ENCODE measurements at regions of chr1 and their contacts with region 1.

Region 1: DNA sequence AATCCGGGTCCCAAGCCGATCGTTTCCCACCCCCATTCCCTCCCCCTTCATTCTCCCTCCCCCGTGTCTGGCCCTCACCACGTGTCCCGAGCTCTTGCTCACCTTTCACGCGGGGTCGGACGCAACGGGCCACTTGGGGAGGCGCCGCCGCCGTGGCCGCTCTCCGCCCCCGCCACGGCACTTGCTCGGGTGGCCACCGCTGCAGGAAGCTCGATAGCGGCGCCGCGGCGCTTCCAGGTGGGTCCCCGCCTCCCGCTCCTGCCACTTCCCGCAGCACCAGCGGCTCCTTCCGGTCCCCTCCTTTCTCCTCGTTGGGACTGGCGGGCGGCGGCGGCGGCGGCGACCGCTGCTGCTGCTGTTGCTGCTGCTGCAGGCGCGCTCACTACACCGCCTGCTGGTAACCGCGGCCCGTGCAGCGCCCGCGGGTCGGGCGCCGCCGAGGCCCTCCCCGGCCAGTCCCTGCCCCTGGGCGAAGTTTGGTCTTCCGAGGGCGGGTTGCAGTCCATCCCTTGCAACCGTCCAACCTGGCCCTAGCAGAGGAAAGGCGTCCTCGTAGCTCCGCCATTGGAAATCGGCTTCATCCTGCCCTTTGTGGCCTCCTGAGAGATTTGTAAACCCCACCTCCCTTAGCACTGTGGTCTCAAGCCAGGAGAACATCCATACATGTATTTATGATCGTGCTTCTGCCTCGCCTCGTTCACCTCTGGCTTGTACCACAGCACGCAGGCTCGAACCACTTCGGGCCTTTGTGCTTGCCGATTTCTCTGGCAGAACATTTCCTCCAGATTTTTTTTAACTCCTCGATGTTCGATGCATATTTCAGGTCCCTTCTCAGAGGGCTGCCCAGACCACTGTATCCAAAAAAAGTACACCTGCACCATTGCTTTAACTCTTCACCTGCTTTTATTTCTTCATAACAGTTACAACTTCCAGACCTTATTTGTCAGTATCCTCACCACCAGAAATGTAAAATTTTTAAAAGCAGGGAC is 996 bp upstream of the ZZZ3 start:
- DNase-seq: peak; percentile 81 to 95 (median 91)
- ATAC-seq: peak; percentile 71
- H3K4me3 ChIP-seq: peak overlapping the region; percentile 82 to 87
- H3K4me3 Mint-ChIP-seq: peak overlapping the region; percentile 91
- H3K27ac ChIP-seq: peak overlapping the region; percentile 89 to 99
- H3K27ac Mint-ChIP-seq: peak overlapping the region; percentile 97
- H3K4me1 ChIP-seq: peaks cover 39% of the 10 kb centered on the region
- H3K4me1 Mint-ChIP-seq: peaks cover 39% of the 10 kb centered on the region
- H3K27me3 ChIP-seq: no peaks in the 10 kb centered on the region
- H3K27me3 Mint-ChIP-seq: no peaks in the 10 kb centered on the region
- CTCF ChIP-seq: peak; percentile 90

Region 2: GRCh38 chr1:75785983-75786853 is 1897.2 kb before region 1 on chr1 and contains the start of gene RABGGTB:
- CTCF ChIA-PET with region 1: no interaction called
- POLR2A ChIA-PET with region 1: no interaction called
- intact Hi-C with region 1: loop called (anchors 2 to 5 kb)
- DNase-seq: peak; percentile 89 to 97 (median 91)
- ATAC-seq: peak; percentile 97
- H3K4me3 ChIP-seq: peak within 1 kb of the TSS; percentile 73
- H3K4me3 Mint-ChIP-seq: peak within 1 kb of the TSS; percentile 96
- H3K27ac ChIP-seq: peak within 1 kb of the TSS; percentile 69 to 89
- H3K27ac Mint-ChIP-seq: peak within 1 kb of the TSS; percentile 97
- H3K4me1 ChIP-seq: peaks cover 46% of the 10 kb centered on the region
- H3K4me1 Mint-ChIP-seq: peaks cover 58% of the 10 kb centered on the region
- H3K27me3 ChIP-seq: no peaks in the 10 kb centered on the region
- H3K27me3 Mint-ChIP-seq: no peaks in the 10 kb centered on the region
- CTCF ChIP-seq: no peak
- total RNA-seq, gene RABGGTB: 186 to 193 TPM

Region 3: DNA sequence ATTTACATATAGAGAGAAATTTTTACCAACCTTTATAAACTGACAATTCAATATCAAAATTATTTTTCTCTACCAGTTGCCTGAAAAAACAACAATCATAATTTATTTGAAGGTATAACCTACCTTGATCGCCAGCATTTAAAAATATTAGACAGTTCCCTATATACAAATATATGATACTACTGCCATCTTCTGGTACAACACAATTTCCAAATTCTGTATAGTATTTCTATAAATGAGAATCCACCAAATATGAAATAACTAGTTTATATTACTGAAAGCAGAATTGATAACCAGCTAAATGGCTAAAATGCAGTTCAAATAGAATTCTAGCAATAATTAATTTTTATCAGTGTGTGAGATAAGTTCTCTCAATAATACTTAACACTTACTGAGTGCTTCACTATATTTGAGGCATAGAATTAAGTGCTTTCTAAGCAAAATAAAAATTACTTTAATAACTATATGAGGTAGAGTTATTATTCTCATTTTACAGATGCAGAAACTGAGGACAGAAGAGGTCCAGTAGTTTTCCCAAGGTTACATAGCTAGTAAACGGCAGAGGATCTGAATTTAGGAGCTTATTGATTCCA is 539.8 kb before region 1 on chr1:
- CTCF ChIA-PET with region 1: no interaction called
- POLR2A ChIA-PET with region 1: no interaction called
- intact Hi-C with region 1: loop called in 1 of 2 experiments (anchors 2 kb)
- DNase-seq: peak in 2 of 9 experiments; percentile 15 to 28
- ATAC-seq: no peak
- H3K4me3 ChIP-seq: no peak overlapping the region
- H3K4me3 Mint-ChIP-seq: no peak overlapping the region
- H3K27ac ChIP-seq: no peak overlapping the region
- H3K27ac Mint-ChIP-seq: no peak overlapping the region
- H3K4me1 ChIP-seq: peaks cover 6% of the 10 kb centered on the region
- H3K4me1 Mint-ChIP-seq: peaks cover 5% of the 10 kb centered on the region
- H3K27me3 ChIP-seq: no peaks in the 10 kb centered on the region
- H3K27me3 Mint-ChIP-seq: no peaks in the 10 kb centered on the region
- CTCF ChIP-seq: peak; percentile 53

Region 4: GRCh38 chr1:77438236-77438913 is 245.1 kb before region 1 on chr1:
- CTCF ChIA-PET with region 1: no interaction called
- POLR2A ChIA-PET with region 1: no interaction called
- intact Hi-C with region 1: loop called in 1 of 2 experiments (anchors 5 kb)
- DNase-seq: no peak
- ATAC-seq: no peak
- H3K4me3 ChIP-seq: peak overlapping the region in 1 of 2 experiments; percentile 8
- H3K4me3 Mint-ChIP-seq: peak overlapping the region; percentile 52
- H3K27ac ChIP-seq: no peak overlapping the region
- H3K27ac Mint-ChIP-seq: peak overlapping the region; percentile 76
- H3K4me1 ChIP-seq: peaks cover 33% of the 10 kb centered on the region
- H3K4me1 Mint-ChIP-seq: peaks cover 32% of the 10 kb centered on the region
- H3K27me3 ChIP-seq: no peaks in the 10 kb centered on the region
- H3K27me3 Mint-ChIP-seq: no peaks in the 10 kb centered on the region
- CTCF ChIP-seq: no peak

Region 5: GRCh38 chr1:77639056-77639455 is 44.4 kb before region 1 on chr1:
- CTCF ChIA-PET with region 1: no interaction called
- POLR2A ChIA-PET with region 1: no interaction called
- intact Hi-C with region 1: loop called (anchors 5 kb)
- DNase-seq: no peak
- ATAC-seq: no peak
- H3K4me3 ChIP-seq: no peak overlapping the region
- H3K4me3 Mint-ChIP-seq: no peak overlapping the region
- H3K27ac ChIP-seq: no peak overlapping the region
- H3K27ac Mint-ChIP-seq: peak overlapping the region; percentile 38
- H3K4me1 ChIP-seq: no peaks in the 10 kb centered on the region
- H3K4me1 Mint-ChIP-seq: peaks cover 18% of the 10 kb centered on the region
- H3K27me3 ChIP-seq: no peaks in the 10 kb centered on the region
- H3K27me3 Mint-ChIP-seq: no peaks in the 10 kb centered on the region
- CTCF ChIP-seq: no peak

Region 6: DNA sequence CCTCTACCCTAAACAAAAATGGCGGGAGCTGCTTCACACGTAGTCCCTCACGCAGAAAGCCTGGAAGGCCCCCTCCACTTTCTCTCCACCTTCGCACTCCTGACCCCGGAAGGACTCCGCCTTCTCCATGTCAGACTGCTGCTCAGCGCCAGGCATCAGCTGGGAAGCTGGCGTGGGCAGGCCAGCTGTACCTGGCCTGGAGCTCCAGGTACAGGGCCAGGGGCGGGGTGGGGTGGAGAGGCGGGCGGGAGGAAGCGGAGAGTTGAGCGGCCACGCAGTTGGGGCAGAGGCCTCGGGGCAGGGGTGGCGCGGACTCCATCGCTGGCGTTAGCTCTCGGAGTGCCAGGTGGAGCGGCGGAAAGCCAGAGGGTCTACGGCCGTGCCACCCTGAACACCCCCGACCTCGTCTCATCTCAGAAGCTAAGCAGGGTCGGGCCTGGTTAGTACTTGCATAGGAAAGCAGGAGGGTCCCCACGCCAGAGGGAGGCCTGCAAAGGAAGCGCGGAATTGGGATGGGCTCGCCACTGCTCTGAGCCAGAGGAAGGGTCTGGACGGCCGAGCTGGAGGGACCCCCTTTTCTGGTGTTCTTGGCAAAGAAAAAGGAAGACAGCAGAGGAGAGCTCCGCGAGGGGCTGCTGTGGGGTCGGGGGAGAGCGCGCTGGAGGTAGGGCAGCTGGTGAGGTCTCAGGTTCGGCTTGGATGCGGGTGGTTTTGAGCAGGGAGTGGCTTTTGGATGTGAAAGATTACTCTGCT is 96.3 kb after region 1 on chr1 and contains the start of gene MIGA1:
- CTCF ChIA-PET with region 1: no interaction called
- POLR2A ChIA-PET with region 1: interaction called, 5 read pairs
- intact Hi-C with region 1: loop called (anchors 1 to 2 kb)
- DNase-seq: peak; percentile 73 to 96 (median 89)
- ATAC-seq: peak; percentile 97
- H3K4me3 ChIP-seq: peak within 1 kb of the TSS; percentile 86 to 90
- H3K4me3 Mint-ChIP-seq: peak within 1 kb of the TSS; percentile 97
- H3K27ac ChIP-seq: peak within 1 kb of the TSS; percentile 61 to 65
- H3K27ac Mint-ChIP-seq: peak within 1 kb of the TSS; percentile 90
- H3K4me1 ChIP-seq: peaks cover 28% of the 10 kb centered on the region
- H3K4me1 Mint-ChIP-seq: peaks cover 41% of the 10 kb centered on the region
- H3K27me3 ChIP-seq: no peaks in the 10 kb centered on the region
- H3K27me3 Mint-ChIP-seq: no peaks in the 10 kb centered on the region
- CTCF ChIP-seq: no peak
- total RNA-seq, gene MIGA1: 11.8 to 13.5 TPM

Region 7: DNA sequence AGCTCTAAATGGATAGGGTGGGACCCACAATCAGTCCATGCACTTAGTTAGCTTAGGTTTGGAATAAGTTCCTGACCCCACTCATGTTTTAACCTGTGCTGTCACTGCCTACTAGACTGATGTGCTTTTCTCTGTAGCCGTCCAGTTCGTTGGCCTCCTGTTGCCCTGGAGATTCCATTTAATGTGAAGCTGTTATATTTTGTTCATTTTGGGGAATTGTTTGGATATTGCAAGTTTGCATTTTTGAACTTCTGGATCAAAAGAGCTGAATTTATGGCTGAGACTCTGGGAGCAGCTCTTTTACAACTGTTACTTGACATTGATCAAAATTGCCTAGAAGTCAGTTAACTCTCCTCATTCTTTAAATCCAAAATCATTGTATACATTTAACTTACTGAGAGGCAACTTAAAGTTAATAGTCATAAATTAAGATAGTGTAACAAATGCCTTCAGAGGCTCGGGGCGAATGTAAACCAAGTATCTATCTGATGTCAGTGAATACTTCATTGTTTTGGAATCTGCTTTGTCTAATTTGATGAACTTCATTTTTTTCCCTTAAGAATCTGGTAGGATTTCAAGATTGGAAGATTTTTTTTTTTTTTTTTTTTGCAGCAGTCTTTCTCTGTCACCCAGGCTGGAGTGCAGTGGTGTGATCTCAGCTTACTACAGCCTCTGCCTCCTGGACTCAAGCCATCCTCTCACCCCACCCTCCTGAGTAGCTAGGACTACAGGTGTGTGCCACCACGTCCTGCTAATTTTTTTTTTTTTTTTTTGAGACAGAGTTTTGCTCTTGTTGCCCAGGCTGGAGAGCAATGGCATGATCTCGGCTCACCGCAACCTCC is 134.1 kb after region 1 on chr1:
- CTCF ChIA-PET with region 1: no interaction called
- POLR2A ChIA-PET with region 1: no interaction called
- intact Hi-C with region 1: no loop called
- DNase-seq: no peak
- ATAC-seq: no peak
- H3K4me3 ChIP-seq: no peak overlapping the region
- H3K4me3 Mint-ChIP-seq: no peak overlapping the region
- H3K27ac ChIP-seq: no peak overlapping the region
- H3K27ac Mint-ChIP-seq: no peak overlapping the region
- H3K4me1 ChIP-seq: no peaks in the 10 kb centered on the region
- H3K4me1 Mint-ChIP-seq: no peaks in the 10 kb centered on the region
- H3K27me3 ChIP-seq: no peaks in the 10 kb centered on the region
- H3K27me3 Mint-ChIP-seq: no peaks in the 10 kb centered on the region
- CTCF ChIP-seq: no peak

Region 8: DNA sequence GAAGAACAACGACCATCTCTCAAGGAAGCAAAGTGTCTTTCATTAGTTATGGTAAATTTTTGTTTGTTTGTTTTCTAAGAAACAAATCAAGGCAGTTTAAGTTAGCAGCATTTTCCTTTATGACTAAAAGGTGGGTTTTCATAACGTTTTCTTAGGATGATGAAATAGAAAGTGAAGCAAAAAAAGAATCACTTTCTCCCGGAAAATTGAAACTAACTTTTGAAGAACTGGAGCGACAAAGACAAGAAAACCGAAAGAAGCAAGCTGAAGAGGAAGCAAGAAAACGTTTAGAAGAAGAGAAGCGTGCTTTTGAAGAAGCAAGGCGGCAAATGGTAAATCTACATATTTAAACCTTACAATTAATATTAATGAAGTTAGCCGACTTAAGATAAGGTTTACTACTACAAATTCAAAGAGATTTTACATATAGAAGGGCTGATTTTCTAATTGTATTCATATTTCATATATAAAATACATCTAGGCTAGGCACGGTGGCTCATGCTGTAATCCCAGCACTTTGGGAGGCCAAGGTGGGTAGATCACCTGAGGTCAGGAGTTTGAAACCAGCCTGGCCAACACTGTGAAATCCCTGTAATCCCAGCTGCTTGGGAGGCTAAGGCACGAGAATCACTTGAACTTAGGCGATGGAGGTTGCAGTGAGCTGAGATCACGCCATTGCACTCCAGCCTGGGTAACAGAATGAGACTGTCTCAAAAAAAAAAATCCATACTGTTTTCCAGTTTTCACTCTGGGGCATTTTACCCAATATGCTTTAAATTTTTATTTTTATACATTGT is 243.3 kb after region 1 on chr1:
- CTCF ChIA-PET with region 1: no interaction called
- POLR2A ChIA-PET with region 1: no interaction called
- intact Hi-C with region 1: no loop called
- DNase-seq: peak in 2 of 9 experiments; percentile 8 to 22
- ATAC-seq: no peak
- H3K4me3 ChIP-seq: peak overlapping the region in 1 of 2 experiments; percentile 20
- H3K4me3 Mint-ChIP-seq: peak overlapping the region; percentile 84
- H3K27ac ChIP-seq: no peak overlapping the region
- H3K27ac Mint-ChIP-seq: peak overlapping the region; percentile 74
- H3K4me1 ChIP-seq: no peaks in the 10 kb centered on the region
- H3K4me1 Mint-ChIP-seq: peaks cover 9% of the 10 kb centered on the region
- H3K27me3 ChIP-seq: no peaks in the 10 kb centered on the region
- H3K27me3 Mint-ChIP-seq: no peaks in the 10 kb centered on the region
- CTCF ChIP-seq: no peak

Region 9: DNA sequence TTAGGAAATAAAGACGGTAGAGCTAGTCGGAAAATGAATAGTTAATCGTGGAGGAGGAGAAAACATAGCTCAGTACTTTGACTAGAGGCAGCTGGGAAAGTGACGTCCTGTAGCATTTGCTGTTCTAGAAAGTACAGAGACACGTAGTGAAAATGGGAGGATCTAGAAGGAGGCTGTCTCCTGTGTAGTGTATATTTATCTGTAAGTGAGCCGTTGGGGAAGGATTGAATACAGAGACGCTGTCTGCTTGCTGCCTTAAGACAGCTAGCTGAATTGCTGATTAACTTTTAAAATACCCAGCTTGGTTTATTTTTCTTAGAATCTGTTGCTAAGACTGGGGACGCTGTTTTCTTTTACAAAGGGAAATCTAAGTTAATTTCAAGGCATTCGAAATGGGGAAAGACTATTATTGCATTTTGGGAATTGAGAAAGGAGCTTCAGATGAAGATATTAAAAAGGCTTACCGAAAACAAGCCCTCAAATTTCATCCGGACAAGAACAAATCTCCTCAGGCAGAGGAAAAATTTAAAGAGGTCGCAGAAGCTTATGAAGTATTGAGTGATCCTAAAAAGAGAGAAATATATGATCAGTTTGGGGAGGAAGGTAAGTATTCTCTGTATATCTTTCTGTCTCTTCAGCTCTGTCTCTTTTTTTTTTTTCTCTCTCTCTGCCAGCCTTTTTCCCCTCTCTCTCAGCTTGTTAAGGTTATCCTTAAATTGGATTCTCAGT is 321.4 kb after region 1 on chr1 and contains the start of gene DNAJB4:
- CTCF ChIA-PET with region 1: no interaction called
- POLR2A ChIA-PET with region 1: interaction called, 11 read pairs
- intact Hi-C with region 1: loop called in 1 of 2 experiments (anchors 1 kb)
- DNase-seq: peak; percentile 20 to 94 (median 60)
- ATAC-seq: peak; percentile 98
- H3K4me3 ChIP-seq: peak within 1 kb of the TSS; percentile 53 to 71
- H3K4me3 Mint-ChIP-seq: peak within 1 kb of the TSS; percentile 93
- H3K27ac ChIP-seq: peak within 1 kb of the TSS; percentile 96 to 98
- H3K27ac Mint-ChIP-seq: peak within 1 kb of the TSS; percentile 99
- H3K4me1 ChIP-seq: peaks cover 16% of the 10 kb centered on the region
- H3K4me1 Mint-ChIP-seq: peaks cover 49% of the 10 kb centered on the region
- H3K27me3 ChIP-seq: no peaks in the 10 kb centered on the region
- H3K27me3 Mint-ChIP-seq: no peaks in the 10 kb centered on the region
- CTCF ChIP-seq: no peak
- total RNA-seq, gene DNAJB4: 13.3 to 13.4 TPM